ENCODE measurements at regions of chr16 and their contacts with region 1.

Region 1: DNA sequence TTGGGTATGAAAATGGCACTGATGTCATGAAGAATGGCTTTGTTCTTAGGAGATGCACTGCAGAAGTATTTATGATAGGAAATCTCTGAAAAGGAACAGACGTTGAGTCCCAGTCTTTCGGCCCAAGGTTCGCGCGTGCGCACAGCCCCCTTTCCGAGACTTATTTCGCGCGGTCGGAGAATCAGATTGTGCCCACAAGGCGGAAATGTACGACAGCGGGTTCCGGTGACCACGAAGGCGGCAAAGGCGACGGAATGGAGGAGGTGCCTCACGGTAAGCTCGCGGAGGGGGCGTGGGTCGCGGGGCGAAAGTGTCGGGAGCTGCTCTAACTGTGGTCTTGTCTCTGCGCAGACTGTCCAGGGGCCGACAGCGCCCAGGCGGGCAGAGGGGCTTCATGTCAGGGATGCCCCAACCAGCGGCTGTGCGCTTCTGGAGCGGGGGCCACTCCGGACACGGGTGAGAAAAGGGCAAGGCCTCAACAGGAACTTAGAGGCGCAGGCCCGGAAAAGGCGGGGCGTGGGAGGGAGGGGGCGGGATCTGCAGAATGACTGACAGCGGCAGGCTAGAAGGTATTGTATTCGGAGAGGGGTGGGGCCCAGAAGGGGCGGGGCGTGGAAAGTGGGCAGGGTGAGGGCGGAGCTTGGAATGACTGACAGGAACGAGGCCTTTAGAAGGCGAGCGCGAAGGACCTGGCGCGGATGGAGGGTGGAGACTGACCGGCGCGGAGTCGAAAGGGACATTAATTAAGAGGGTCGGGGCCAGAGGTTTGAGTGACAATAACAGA is at the start of gene NUBP1:
- DNase-seq: peak; percentile 97
- H3K4me3 Mint-ChIP-seq: peak within 1 kb of the TSS; percentile 87
- H3K27ac Mint-ChIP-seq: peak within 1 kb of the TSS; percentile 93
- H3K4me1 Mint-ChIP-seq: peaks cover 57% of the 10 kb centered on the region
- H3K27me3 Mint-ChIP-seq: no peaks in the 10 kb centered on the region
- total RNA-seq, gene NUBP1: 39.8 and 42.4 TPM in 2 replicates

Region 2: DNA sequence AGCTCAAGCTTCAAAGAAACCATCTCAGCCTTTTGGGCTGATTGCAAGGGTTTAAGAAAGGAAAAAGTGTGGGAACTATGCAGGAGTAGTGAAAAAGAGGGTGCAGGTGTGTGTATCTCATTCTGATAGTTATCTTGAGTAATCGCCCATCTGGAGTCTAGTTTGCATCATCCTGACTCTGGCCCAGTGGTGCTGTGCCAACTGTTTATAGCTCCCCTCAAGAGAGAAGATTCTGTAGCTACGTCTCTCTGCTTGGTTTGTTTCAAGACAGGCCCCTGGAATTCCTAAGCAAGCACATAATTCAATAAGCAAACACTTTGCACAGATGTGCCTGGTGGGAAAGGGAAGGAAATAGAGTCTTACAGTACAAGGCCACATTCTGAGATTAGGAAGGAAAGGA is 1507.9 kb before region 1 on chr16:
- intact Hi-C with region 1: no loop called
- DNase-seq: no peak
- H3K4me3 Mint-ChIP-seq: no peak overlapping the region
- H3K27ac Mint-ChIP-seq: no peak overlapping the region
- H3K4me1 Mint-ChIP-seq: no peaks in the 10 kb centered on the region
- H3K27me3 Mint-ChIP-seq: peaks cover 2% of the 10 kb centered on the region

Region 3: GRCh38 chr16:10385725-10386516 is 357.9 kb before region 1 on chr16 and contains the start of gene ATF7IP2:
- intact Hi-C with region 1: loop called (anchors 2 kb)
- DNase-seq: peak; percentile 87
- H3K4me3 Mint-ChIP-seq: peak within 1 kb of the TSS; percentile 97
- H3K27ac Mint-ChIP-seq: peak within 1 kb of the TSS; percentile 97
- H3K4me1 Mint-ChIP-seq: peaks cover 58% of the 10 kb centered on the region
- H3K27me3 Mint-ChIP-seq: no peaks in the 10 kb centered on the region
- total RNA-seq, gene ATF7IP2: 25.9 and 28.7 TPM in 2 replicates

Region 4: GRCh38 chr16:10812312-10813098 is 68.7 kb after region 1 on chr16:
- intact Hi-C with region 1: loop called (anchors 5 kb)
- DNase-seq: no peak
- H3K4me3 Mint-ChIP-seq: peak overlapping the region; percentile 66
- H3K27ac Mint-ChIP-seq: peak overlapping the region; percentile 67
- H3K4me1 Mint-ChIP-seq: peaks cover 20% of the 10 kb centered on the region
- H3K27me3 Mint-ChIP-seq: peaks cover 3% of the 10 kb centered on the region

Region 5: GRCh38 chr16:10876799-10877341 is 133.1 kb after region 1 on chr16 and contains the start of gene CIITA:
- intact Hi-C with region 1: loop called (anchors 2 kb)
- DNase-seq: peak; percentile 53
- H3K4me3 Mint-ChIP-seq: peak within 1 kb of the TSS; percentile 86
- H3K27ac Mint-ChIP-seq: peak within 1 kb of the TSS; percentile 59
- H3K4me1 Mint-ChIP-seq: peaks cover 88% of the 10 kb centered on the region
- H3K27me3 Mint-ChIP-seq: peaks cover 14% of the 10 kb centered on the region
- total RNA-seq, gene CIITA: 12.0 and 13.0 TPM in 2 replicates

Region 6: GRCh38 chr16:11851294-11852091 is 1107.7 kb after region 1 on chr16 and contains the start of gene RSL1D1:
- intact Hi-C with region 1: loop called (anchors 5 kb)
- DNase-seq: peak; percentile 95
- H3K4me3 Mint-ChIP-seq: peak within 1 kb of the TSS; percentile 99
- H3K27ac Mint-ChIP-seq: peak within 1 kb of the TSS; percentile 97
- H3K4me1 Mint-ChIP-seq: peaks cover 44% of the 10 kb centered on the region
- H3K27me3 Mint-ChIP-seq: no peaks in the 10 kb centered on the region
- total RNA-seq, gene RSL1D1: 345 and 369 TPM in 2 replicates

Region 7: GRCh38 chr16:12082226-12082887 is 1338.6 kb after region 1 on chr16:
- intact Hi-C with region 1: loop called (anchors 5 kb)
- DNase-seq: no peak
- H3K4me3 Mint-ChIP-seq: no peak overlapping the region
- H3K27ac Mint-ChIP-seq: peak overlapping the region; percentile 71
- H3K4me1 Mint-ChIP-seq: peaks cover 51% of the 10 kb centered on the region
- H3K27me3 Mint-ChIP-seq: no peaks in the 10 kb centered on the region